ENCODE measurements at regions of chr11 and their contacts with region 1.

Region 1: GRCh38 chr11:82305123-82305522 is 428.5 kb downstream of the FAM181B start:
- DNase-seq: no peak
- ATAC-seq: no peak

Region 2: DNA sequence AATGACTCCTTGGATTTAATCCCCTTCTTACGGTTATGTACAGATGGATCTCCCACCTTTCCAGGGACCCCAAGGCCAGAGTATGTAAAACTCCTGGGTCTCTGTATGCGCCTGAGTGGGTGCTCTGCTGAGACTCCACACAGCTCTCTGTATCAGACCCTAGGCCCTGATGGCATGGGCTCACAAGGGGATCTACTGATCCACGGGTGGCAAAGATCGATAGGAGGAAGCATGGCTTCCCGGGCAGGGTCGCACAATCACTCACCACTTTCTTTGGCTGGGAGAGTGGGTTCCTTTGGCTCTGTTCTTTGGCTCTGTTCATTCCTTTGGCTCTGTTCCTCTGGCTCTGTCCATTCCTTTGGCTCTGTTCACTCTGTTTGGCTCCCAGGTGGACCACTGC is 65.2 kb before region 1 on chr11:
- intact Hi-C with region 1: loop called (anchors 10 kb)
- DNase-seq: no peak
- ATAC-seq: no peak

Region 3: GRCh38 chr11:82384308-82384707 is 79.2 kb after region 1 on chr11:
- intact Hi-C with region 1: no loop called
- DNase-seq: no peak
- ATAC-seq: no peak

Measured in Right ventricle myocardium superior (tissue), 1 donor.